SK-N-SH (cell line): ENCODE measurements at regions of chr11 and their contacts with region 1.

Region 1: GRCh38 chr11:2196970-2197770 is 25.6 kb upstream of the TH start:
- DNase-seq: peak; percentile 91
- H3K4me3 ChIP-seq: no peak overlapping the region
- H3K27ac ChIP-seq: no peak overlapping the region
- H3K4me1 ChIP-seq: peaks cover 0 to 28% of the 10 kb centered on the region in 2 experiments; a peak in 1 of 4 replicates
- H3K27me3 ChIP-seq: no peaks in the 10 kb centered on the region
- CTCF ChIP-seq: peak; percentile 60
- EP300 ChIP-seq: no peak
- RAD21 ChIP-seq: peak; percentile 91

Region 2: GRCh38 chr11:1963864-1964263 is 233.3 kb before region 1 on chr11:
- CTCF ChIA-PET with region 1: no interaction called
- POLR2A ChIA-PET with region 1: no interaction called
- DNase-seq: no peak
- H3K4me3 ChIP-seq: no peak overlapping the region
- H3K27ac ChIP-seq: no peak overlapping the region
- H3K4me1 ChIP-seq: no peaks in the 10 kb centered on the region
- H3K27me3 ChIP-seq: no peaks in the 10 kb centered on the region
- CTCF ChIP-seq: no peak
- EP300 ChIP-seq: no peak
- RAD21 ChIP-seq: no peak

Region 3: GRCh38 chr11:2128130-2128510 is 69.0 kb before region 1 on chr11:
- CTCF ChIA-PET with region 1: no interaction called
- POLR2A ChIA-PET with region 1: no interaction called
- DNase-seq: no peak
- H3K4me3 ChIP-seq: no peak overlapping the region
- H3K27ac ChIP-seq: no peak overlapping the region
- H3K4me1 ChIP-seq: peaks cover 0 to 5% of the 10 kb centered on the region in 2 experiments; a peak in 1 of 4 replicates
- H3K27me3 ChIP-seq: no peaks in the 10 kb centered on the region
- CTCF ChIP-seq: no peak
- EP300 ChIP-seq: no peak
- RAD21 ChIP-seq: no peak

Region 4: DNA sequence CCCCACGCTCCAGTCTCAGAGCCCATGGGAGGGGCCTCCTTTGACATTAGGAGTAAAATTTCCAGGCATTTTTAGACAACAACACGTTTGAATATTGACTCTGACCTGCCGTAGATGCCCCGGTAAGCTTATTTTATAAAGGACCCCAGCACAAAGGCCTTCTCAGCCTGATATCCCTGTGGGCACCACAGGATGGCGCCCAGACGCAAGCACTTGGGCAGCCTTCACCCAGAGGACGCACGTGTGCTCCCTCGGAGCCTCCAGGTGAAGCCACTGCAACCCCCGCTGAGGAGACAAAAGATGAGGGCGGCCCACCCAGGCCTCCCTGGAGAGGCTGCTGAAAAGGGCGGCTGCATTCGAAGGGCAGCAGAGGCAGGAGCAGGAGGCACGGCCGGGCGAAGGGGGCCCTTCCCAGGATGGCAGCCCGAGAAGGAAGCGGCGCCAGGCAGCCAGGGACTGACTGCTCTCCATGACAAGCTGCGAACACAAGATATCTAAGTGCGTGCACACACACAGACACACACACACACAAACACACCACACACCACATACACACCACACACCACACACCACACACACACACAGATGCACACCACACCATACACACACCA is 10.4 kb before region 1 on chr11:
- CTCF ChIA-PET with region 1: interaction called, 25 read pairs
- POLR2A ChIA-PET with region 1: interaction called, 4 read pairs
- DNase-seq: peak; percentile 80
- H3K4me3 ChIP-seq: no peak overlapping the region
- H3K27ac ChIP-seq: no peak overlapping the region; a peak in 1 of 4 replicates
- H3K4me1 ChIP-seq: peaks cover 0 to 39% of the 10 kb centered on the region in 2 experiments; a peak in 1 of 4 replicates
- H3K27me3 ChIP-seq: no peaks in the 10 kb centered on the region
- CTCF ChIP-seq: peak; percentile 17; the same call in 1 of the 2 replicates
- EP300 ChIP-seq: no peak
- RAD21 ChIP-seq: peak; percentile 73

Region 5: DNA sequence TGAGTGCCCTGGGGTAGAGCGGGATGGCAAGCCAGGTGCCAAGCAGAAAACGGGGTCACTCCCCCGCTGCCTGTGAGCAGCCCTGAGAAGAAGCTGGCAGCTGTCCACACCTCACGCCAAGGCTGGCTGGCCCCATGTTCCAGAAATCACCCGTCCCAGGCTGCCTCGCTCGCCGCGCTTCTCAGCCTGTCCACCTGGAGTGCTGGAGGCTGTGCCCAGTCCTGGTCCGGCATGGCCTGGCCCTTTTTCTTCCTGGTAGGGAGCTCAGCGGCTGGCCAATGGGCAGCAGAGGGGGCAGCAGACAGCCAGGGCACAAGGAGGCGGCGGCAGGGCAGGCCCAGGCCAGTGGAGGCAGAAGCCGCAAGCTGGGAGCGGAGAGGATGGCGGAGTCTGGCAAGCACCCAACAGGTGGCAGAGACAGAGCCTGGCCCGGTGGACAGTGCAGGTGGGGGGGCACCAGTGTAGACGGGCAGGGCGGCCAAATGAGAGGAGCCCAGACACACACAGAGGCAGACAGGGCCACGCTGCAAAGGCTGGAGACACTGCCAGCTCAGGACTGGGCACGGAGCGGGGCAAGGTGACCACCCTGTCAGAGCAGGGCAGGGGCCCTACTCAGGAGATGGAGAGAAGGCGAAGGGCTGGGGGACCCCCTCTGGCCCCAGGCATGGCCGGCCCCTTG is 11.7 kb after region 1 on chr11:
- CTCF ChIA-PET with region 1: interaction called, 19 read pairs
- POLR2A ChIA-PET with region 1: no interaction called
- DNase-seq: peak; percentile 72
- H3K4me3 ChIP-seq: no peak overlapping the region
- H3K27ac ChIP-seq: no peak overlapping the region; a peak in 1 of 4 replicates
- H3K4me1 ChIP-seq: peaks cover 0 to 21% of the 10 kb centered on the region in 2 experiments; a peak in 1 of 4 replicates
- H3K27me3 ChIP-seq: no peaks in the 10 kb centered on the region
- CTCF ChIP-seq: no peak
- EP300 ChIP-seq: no peak
- RAD21 ChIP-seq: no peak

Region 6: GRCh38 chr11:2298795-2299761 is 101.9 kb after region 1 on chr11:
- CTCF ChIA-PET with region 1: interaction called, 43 read pairs
- POLR2A ChIA-PET with region 1: interaction called, 3 read pairs
- DNase-seq: peak; percentile 62
- H3K4me3 ChIP-seq: no peak overlapping the region
- H3K27ac ChIP-seq: no peak overlapping the region
- H3K4me1 ChIP-seq: peaks cover 0 to 26% of the 10 kb centered on the region in 2 experiments; a peak in 1 of 4 replicates
- H3K27me3 ChIP-seq: no peaks in the 10 kb centered on the region
- CTCF ChIP-seq: no peak
- EP300 ChIP-seq: no peak
- RAD21 ChIP-seq: peak; percentile 63

Region 7: GRCh38 chr11:2305140-2305840 is 108.1 kb after region 1 on chr11:
- CTCF ChIA-PET with region 1: interaction called, 43 read pairs
- POLR2A ChIA-PET with region 1: interaction called, 3 read pairs
- DNase-seq: peak; percentile 85
- H3K4me3 ChIP-seq: peak overlapping the region in 1 of 2 experiments; percentile 27; a peak in 1 of 4 replicates
- H3K27ac ChIP-seq: peak overlapping the region; percentile 82 to 87; a peak in 3 of 4 replicates
- H3K4me1 ChIP-seq: peaks cover 12 to 48% of the 10 kb centered on the region in 2 experiments; a peak in 3 of 4 replicates
- H3K27me3 ChIP-seq: no peaks in the 10 kb centered on the region
- CTCF ChIP-seq: peak; percentile 85
- EP300 ChIP-seq: no peak
- RAD21 ChIP-seq: peak; percentile 88

Region 8: DNA sequence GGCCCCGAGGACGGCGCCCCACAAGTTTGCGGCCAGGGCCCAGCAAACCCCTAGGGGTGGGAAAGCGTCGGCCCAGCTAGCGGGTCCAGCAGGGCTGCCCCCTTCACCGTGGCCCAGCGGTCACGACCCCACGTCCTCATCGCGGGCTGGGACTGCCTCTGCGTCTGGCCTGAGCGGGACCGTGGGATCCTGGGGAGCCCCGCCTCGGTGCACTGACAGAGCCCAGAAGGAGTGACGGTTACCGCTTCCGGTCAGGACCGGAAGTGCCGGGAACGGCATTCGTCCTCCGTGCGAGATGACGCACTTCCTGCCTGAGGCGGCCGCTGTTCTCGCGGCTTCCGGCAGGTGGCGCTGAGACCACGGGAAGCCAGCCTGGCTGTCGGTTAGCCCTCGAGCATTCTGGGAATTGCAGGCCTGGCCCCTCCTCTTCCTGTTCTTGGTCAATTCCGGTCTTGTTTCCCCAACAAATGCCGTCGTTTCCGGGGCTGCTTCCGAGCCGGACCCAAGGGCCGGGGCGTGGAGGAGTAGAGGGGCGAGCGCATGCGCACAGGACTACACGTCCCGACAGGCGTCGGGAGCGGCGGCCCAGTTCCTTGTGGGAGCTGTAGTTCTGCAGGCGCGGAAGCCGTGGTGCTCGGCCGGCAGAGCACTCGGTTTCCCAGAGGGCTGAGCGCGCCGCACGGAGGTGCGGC is 203.0 kb after region 1 on chr11 and contains the start of gene TSSC4:
- CTCF ChIA-PET with region 1: interaction called, 14 read pairs
- POLR2A ChIA-PET with region 1: interaction called, 17 read pairs
- DNase-seq: peak; percentile 99
- H3K4me3 ChIP-seq: peak within 1 kb of the TSS; percentile 99 to 100
- H3K27ac ChIP-seq: peak within 1 kb of the TSS; percentile 93 to 95
- H3K4me1 ChIP-seq: peaks cover 10 to 23% of the 10 kb centered on the region in 2 experiments; a peak in 2 of 4 replicates
- H3K27me3 ChIP-seq: no peaks in the 10 kb centered on the region
- CTCF ChIP-seq: peak; percentile 96
- EP300 ChIP-seq: peak in 1 of 2 experiments; percentile 25; a peak in 1 of 4 replicates
- RAD21 ChIP-seq: peak; percentile 83
- polyA plus RNA-seq, gene TSSC4: 45.1 and 45.3 TPM in 2 replicates